Dendritic cell treated with granulocyte-macrophage colony-stimulating factor and Interleukin-4, amounts not matched to agents 40 ng/mL and 50 ng/mL, for 4 days (primary cell): ENCODE measurements at regions of chr6 and their contacts with region 1.

Region 1: DNA sequence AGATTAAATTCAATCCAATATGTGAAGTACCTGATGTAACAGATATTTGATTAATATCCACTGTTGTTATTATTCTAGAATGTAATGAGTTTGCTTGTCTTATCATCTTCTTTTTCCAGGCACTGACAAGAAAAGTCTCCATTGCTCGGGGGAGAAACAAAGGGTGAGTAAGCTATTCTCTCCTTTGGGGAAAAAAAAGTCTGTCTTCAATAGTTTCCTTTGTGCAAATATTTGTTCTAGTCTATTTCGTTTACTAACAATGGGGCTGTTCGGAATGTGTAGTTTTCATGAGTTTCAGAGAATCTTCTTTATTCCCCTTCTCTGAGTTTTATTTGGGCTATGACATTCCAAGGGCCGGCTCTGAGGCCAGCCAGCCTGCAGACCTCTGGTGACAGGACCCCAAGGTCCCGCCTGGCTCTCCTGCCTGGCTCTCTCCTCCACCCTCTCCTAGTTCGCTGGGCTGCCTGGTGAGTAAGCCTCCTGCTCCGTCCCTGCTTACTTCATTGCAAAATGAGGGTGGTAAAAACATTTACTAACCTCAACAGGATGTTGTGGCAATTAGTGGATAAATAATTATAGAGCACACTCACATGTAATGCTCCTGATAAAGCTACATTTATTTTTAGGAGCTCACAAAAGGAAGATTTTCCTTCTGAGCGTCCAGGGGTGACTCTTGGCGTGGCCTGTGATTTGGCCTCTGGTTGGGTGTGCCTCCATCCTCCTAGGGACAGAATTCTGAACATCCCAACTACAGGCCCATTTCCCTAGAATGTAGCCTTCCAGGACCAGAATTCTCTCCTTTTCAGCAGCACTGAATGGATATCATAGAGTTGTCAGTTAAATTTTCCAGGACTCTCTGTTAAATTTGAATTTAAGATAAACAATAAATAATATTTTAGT is 43.1 kb upstream of the SNX9 start:
- H3K4me3 Mint-ChIP-seq: no peak overlapping the region
- H3K27ac Mint-ChIP-seq: no peak overlapping the region
- H3K4me1 Mint-ChIP-seq: peaks cover 5% of the 10 kb centered on the region
- H3K27me3 Mint-ChIP-seq: peaks cover 7% of the 10 kb centered on the region

Region 2: GRCh38 chr6:157494132-157494710 is 285.7 kb before region 1 on chr6:
- intact Hi-C with region 1: no loop called
- H3K4me3 Mint-ChIP-seq: no peak overlapping the region
- H3K27ac Mint-ChIP-seq: no peak overlapping the region
- H3K4me1 Mint-ChIP-seq: peaks cover 9% of the 10 kb centered on the region
- H3K27me3 Mint-ChIP-seq: peaks cover 11% of the 10 kb centered on the region

Region 3: GRCh38 chr6:157813757-157814455 is 34.0 kb after region 1 on chr6:
- intact Hi-C with region 1: loop called (anchors 1 kb)
- H3K4me3 Mint-ChIP-seq: no peak overlapping the region
- H3K27ac Mint-ChIP-seq: no peak overlapping the region
- H3K4me1 Mint-ChIP-seq: peaks cover 28% of the 10 kb centered on the region
- H3K27me3 Mint-ChIP-seq: peaks cover 9% of the 10 kb centered on the region